ENCODE measurements at regions of chr13 and their contacts with region 1.

Region 1: GRCh38 chr13:75694722-75695121 is 58.6 kb downstream of the LMO7 start:
- DNase-seq: no peak
- ATAC-seq: no peak
- H3K4me3 ChIP-seq: no peak overlapping the region
- H3K27ac ChIP-seq: no peak overlapping the region
- H3K4me1 ChIP-seq: no peaks in the 10 kb centered on the region
- H3K27me3 ChIP-seq: no peaks in the 10 kb centered on the region
- CTCF ChIP-seq: no peak
- POLR2A ChIP-seq: no peak
- RAD21 ChIP-seq: no peak

Region 2: DNA sequence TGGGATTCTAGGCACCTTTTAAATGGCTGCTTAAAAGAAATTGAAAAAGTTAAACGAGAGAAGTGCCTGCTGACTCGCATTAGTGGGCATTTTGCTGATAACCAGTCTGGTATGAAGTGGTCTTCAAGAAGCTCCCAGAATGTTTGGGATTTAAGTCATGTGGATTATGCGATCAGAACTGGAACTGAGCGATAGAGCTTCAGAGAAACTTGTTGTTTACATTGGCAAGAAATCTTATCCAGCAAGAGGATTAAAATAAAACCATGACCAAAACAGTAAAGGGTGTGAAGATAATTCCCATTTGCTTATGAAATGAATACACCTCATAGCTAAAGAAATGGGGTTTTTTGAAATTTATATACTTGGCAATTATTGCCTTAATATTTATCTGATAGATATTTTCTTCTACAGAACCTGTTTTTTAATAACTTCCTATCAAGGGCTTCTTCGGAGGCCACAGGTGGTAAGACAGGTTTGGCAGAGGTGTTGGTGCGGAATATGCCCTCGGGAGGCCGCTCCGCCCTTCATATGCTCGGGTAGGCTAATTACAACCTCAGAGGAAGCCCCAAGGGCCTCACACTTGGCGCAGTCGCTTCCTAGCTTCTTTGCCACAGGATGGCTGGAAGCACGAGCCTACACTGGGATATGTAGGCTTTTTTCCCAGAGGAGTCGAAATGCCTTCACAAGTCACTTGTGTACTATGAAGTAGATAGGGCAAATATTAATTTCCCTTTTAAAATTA is 10.0 kb after region 1 on chr13:
- CTCF ChIA-PET with region 1: interaction called, 34 read pairs
- POLR2A ChIA-PET with region 1: interaction called, 4 read pairs
- RAD21 ChIA-PET with region 1: no interaction called
- intact Hi-C with region 1: no loop called
- DNase-seq: peak; percentile 84
- ATAC-seq: peak; percentile 95
- H3K4me3 ChIP-seq: peak overlapping the region; percentile 1 to 52; a peak in 3 of 4 replicates
- H3K27ac ChIP-seq: peak overlapping the region; percentile 82
- H3K4me1 ChIP-seq: peaks cover 27 to 35% of the 10 kb centered on the region in 2 experiments
- H3K27me3 ChIP-seq: no peaks in the 10 kb centered on the region
- CTCF ChIP-seq: peak in 1 of 3 experiments; percentile 33; a peak in 2 of 6 replicates
- POLR2A ChIP-seq: no peak
- RAD21 ChIP-seq: peak; percentile 49

Region 3: DNA sequence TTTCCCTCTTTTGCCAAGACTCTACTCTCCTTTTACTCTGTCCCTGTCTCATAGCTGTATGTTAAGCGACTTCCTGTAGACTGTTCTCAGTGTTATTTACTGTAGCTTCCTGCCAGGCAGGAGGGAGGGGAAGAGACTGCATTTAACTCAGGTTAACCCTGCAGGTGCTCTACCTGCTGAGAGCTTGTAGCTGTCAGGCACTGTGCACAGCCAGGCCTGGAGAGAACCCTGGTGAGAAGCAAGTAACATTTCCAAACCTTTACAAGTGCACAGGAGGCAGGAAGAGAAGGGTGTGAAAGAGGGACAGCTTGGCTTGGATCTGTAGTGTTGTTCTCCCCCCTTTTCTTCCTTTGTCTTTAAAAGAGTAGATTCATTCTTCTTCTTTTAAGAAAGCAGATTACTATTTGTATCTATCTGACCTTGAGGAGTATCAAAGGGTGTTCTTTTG is 108.5 kb after region 1 on chr13:
- CTCF ChIA-PET with region 1: interaction called, 58 read pairs
- POLR2A ChIA-PET with region 1: no interaction called
- RAD21 ChIA-PET with region 1: no interaction called
- intact Hi-C with region 1: loop called (anchors 1 kb)
- DNase-seq: no peak
- ATAC-seq: no peak
- H3K4me3 ChIP-seq: no peak overlapping the region
- H3K27ac ChIP-seq: no peak overlapping the region
- H3K4me1 ChIP-seq: peaks cover 8 to 12% of the 10 kb centered on the region in 2 experiments
- H3K27me3 ChIP-seq: no peaks in the 10 kb centered on the region
- CTCF ChIP-seq: no peak
- POLR2A ChIP-seq: no peak
- RAD21 ChIP-seq: no peak

Region 4: DNA sequence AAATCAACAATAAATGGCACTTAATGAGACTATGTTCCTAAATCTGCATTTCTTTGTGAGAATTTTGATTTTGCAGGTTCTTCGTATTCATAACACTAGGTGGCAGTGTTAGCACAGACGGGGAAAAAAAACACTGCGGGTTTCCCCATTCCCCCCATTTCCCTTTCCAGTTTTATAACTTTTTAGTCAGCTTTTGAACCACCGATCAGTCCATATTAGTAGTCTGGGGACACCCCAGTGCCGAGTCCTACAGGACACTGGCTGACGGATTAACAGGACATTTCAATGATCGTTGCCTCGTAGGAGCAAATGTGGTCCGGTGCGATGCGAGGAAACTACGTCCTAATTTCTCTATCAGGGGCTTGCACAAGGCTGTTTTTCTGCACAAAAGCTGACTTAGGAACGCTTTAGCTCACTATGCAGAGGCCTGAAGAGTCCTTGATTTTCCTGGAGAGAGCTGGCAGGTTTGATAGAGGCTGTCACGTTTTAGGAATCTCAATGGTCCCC is 175.7 kb after region 1 on chr13:
- CTCF ChIA-PET with region 1: interaction called, 13 read pairs
- POLR2A ChIA-PET with region 1: no interaction called
- RAD21 ChIA-PET with region 1: no interaction called
- intact Hi-C with region 1: loop called (anchors 5 kb)
- DNase-seq: no peak
- ATAC-seq: peak; percentile 53; the same call in 1 of the 2 replicates
- H3K4me3 ChIP-seq: no peak overlapping the region
- H3K27ac ChIP-seq: no peak overlapping the region
- H3K4me1 ChIP-seq: no peaks in the 10 kb centered on the region
- H3K27me3 ChIP-seq: no peaks in the 10 kb centered on the region
- CTCF ChIP-seq: peak; percentile 31 to 83 (median 70); a peak in 5 of 6 replicates
- POLR2A ChIP-seq: no peak
- RAD21 ChIP-seq: peak; percentile 62

Region 5: DNA sequence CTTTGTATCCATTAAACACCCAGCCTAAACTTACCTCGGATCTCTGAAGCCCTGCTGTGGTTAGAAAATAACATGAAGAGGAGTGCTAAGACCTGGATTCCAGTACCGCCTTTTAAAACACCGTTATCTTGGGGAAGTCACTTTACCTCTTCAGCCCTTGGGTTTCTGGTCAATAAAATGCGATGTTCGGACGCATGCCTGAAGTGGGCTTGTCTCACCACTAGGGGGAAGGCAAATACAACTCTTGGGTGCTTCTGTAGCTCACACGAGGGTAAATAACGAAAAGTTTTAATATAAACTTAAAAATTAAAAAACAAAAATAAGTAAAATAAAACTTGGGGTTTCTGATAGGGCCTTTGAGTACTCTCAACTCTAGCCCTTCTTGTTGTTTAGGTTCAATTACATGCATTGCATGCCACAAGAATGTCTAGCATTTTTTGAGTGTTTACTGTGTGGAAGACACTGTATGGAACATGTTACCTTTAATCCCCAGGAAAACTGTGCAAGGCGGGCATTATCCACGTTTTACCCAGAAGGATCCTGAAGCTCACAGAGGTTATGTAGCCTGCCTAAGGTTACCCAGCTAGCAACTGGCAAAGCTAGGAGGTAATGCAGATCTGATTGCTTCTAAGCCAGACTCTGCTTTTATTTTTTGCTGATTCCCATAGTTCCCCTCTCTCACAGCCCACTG is 181.8 kb after region 1 on chr13:
- CTCF ChIA-PET with region 1: interaction called, 13 read pairs
- POLR2A ChIA-PET with region 1: no interaction called
- RAD21 ChIA-PET with region 1: no interaction called
- intact Hi-C with region 1: loop called (anchors 5 kb)
- DNase-seq: peak; percentile 60
- ATAC-seq: peak; percentile 98
- H3K4me3 ChIP-seq: no peak overlapping the region
- H3K27ac ChIP-seq: no peak overlapping the region
- H3K4me1 ChIP-seq: peaks cover 0 to 4% of the 10 kb centered on the region in 2 experiments; a peak in 1 of 4 replicates
- H3K27me3 ChIP-seq: no peaks in the 10 kb centered on the region
- CTCF ChIP-seq: peak; percentile 81 to 86 (median 85)
- POLR2A ChIP-seq: no peak
- RAD21 ChIP-seq: peak; percentile 90

Region 6: GRCh38 chr13:77099415-77099814 is 1404.7 kb after region 1 on chr13:
- CTCF ChIA-PET with region 1: no interaction called
- POLR2A ChIA-PET with region 1: no interaction called
- RAD21 ChIA-PET with region 1: no interaction called
- intact Hi-C with region 1: no loop called
- DNase-seq: no peak
- ATAC-seq: no peak
- H3K4me3 ChIP-seq: no peak overlapping the region
- H3K27ac ChIP-seq: no peak overlapping the region
- H3K4me1 ChIP-seq: no peaks in the 10 kb centered on the region
- H3K27me3 ChIP-seq: no peaks in the 10 kb centered on the region
- CTCF ChIP-seq: no peak
- POLR2A ChIP-seq: no peak
- RAD21 ChIP-seq: no peak

Region 7: DNA sequence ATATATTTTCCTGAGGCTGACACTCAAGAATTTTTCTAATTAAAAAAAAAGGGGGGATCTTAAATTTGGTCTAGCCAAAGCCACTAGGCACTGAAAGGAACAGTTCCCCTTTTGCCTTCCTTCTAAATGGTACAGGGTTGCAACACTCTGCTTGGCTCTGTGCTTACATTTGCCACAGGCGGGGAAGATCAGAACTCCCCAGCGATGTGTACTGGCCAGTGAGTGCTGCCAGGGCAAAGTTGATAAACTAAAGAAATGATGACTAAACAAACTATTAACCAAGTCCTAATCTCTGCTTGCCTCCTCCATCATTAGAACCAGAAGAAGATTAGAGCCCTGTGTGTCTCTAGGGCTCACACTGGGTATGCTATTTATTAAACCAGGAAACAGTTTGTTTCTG is 1765.5 kb after region 1 on chr13:
- CTCF ChIA-PET with region 1: no interaction called
- POLR2A ChIA-PET with region 1: no interaction called
- RAD21 ChIA-PET with region 1: no interaction called
- intact Hi-C with region 1: no loop called
- DNase-seq: no peak
- ATAC-seq: no peak
- H3K4me3 ChIP-seq: no peak overlapping the region
- H3K27ac ChIP-seq: no peak overlapping the region
- H3K4me1 ChIP-seq: no peaks in the 10 kb centered on the region
- H3K27me3 ChIP-seq: peaks cover 34% of the 10 kb centered on the region
- CTCF ChIP-seq: no peak
- POLR2A ChIP-seq: no peak
- RAD21 ChIP-seq: no peak

Measured in HCT116 (cell line).